Calu3 (cell line): ENCODE measurements at regions of chr22 and their contacts with region 1.

Region 1: GRCh38 chr22:50326959-50327710 is at the start of gene DENND6B:
- DNase-seq: peak; percentile 86
- H3K4me3 Mint-ChIP-seq: peak within 1 kb of the TSS; percentile 74
- H3K27ac Mint-ChIP-seq: peak within 1 kb of the TSS; percentile 67
- H3K4me1 Mint-ChIP-seq: peaks cover 31% of the 10 kb centered on the region
- H3K27me3 Mint-ChIP-seq: no peaks in the 10 kb centered on the region
- CTCF ChIP-seq: peak; percentile 35
- total RNA-seq, gene DENND6B: 13.2 and 19.0 TPM in 2 replicates

Region 2: DNA sequence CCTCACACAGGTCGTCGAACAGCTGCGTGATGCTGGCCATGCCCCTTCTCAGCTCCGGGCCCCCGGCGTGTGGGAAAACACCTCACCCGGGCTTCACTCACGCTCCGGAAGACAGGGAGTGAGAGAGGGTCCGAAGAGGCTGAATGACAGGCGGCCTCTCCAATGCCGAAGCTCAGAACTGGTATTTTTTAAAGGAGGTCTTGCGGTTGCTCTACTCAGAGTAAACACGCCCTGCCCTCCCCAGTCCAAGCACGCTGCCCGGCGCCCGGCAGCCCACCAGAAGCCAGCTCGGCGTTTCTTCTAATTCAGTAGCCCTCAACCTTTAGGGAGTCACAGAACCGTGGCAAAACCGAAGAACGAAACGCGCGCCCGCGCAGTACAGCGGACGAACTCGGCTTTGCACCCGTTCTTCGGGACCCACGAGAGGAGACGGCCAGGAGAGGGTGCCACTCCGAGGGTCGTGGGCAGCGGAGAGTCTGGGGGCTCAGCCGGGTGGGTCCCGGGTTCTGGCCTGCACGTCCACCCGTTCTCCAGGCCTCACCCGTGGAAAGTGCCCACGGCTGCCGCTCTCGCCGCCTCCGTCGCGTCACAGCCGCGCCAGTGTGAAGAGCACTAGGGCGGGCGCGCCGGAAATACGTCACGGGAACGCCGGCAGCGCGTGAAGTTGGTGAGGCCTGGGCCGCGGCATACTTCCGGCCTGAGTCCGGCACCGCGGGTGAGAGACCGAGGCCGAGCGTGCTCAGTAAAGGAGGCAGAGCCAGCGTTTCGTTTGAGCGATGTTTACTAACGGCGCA is 82.5 kb before region 1 on chr22 and contains the start of gene TUBGCP6:
- CTCF ChIA-PET with region 1: no interaction called
- intact Hi-C with region 1: no loop called
- DNase-seq: peak; percentile 94
- H3K4me3 Mint-ChIP-seq: peak within 1 kb of the TSS; percentile 78
- H3K27ac Mint-ChIP-seq: peak within 1 kb of the TSS; percentile 83
- H3K4me1 Mint-ChIP-seq: peaks cover 11% of the 10 kb centered on the region
- H3K27me3 Mint-ChIP-seq: no peaks in the 10 kb centered on the region
- CTCF ChIP-seq: peak; percentile 8
- total RNA-seq, gene TUBGCP6: 49.7 and 54.7 TPM in 2 replicates

Region 3: DNA sequence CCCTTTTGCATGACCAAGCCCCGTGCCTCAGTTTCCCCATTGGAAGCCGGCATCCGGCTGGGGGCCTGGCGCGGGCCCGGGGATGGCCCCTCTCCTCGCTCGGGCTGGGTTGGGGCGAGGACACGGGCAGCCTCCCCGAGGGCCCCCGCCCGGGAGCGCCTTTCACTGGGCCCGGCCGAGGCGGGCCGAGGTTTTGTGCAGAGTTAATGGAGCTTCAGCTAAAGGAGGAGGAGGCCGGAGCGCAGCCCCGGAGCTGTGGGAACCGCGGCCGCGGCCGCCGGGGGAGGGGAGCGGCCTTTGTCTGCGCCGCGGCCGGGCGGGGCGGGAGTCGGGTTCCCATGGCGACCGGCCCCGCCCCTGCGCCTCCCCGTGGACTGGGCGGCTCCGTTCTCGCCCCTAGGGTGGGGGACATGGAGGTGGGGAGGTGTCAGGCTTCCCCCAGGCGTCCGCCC is 55.6 kb before region 1 on chr22:
- CTCF ChIA-PET with region 1: interaction called, 6 read pairs
- intact Hi-C with region 1: loop called (anchors 5 kb)
- DNase-seq: peak; percentile 79
- H3K4me3 Mint-ChIP-seq: peak overlapping the region; percentile 63
- H3K27ac Mint-ChIP-seq: no peak overlapping the region
- H3K4me1 Mint-ChIP-seq: peaks cover 25% of the 10 kb centered on the region
- H3K27me3 Mint-ChIP-seq: no peaks in the 10 kb centered on the region
- CTCF ChIP-seq: no peak